PC-9 (cell line): ENCODE measurements at regions of chr5 and their contacts with region 1.

Region 1: DNA sequence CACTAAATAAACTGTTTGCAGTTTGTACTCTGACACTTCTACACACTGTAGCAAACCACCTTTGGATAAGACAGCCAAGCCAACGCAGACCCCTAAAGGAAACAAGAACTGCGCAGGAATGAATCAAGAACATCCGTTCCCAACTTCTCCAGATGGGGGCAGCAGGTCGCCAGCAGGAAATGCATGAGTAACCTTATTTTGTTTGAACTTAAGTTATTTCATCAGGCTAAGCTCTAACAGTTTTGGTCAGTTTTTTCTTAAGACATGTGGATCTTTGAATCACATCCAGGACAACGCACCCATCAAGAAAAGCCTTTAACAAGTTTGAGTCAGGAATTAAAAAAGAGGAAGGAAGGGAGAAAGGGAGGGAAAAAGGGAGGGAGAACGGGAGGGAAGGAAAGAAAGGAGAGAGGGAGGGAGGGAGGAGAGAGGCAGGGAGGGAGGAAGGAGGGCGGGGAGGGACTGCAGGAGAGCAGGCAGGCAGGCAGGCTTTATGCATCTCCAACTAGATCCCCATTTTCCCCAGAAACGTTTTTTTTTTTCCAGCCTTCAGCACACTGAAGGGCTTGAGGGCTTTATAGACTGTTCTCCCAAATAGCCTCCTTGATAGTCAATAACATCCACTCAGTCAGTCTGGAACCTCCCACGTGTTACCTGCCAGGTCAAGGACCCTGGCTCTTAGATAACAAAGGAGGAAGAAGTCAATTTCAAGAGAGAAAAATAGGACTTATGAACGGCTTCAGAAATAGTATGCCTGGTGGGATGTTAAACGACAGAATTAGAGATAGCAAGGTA is 22.2 kb downstream of the BHMT start:
- DNase-seq: peak; percentile 61 to 66
- H3K4me3 ChIP-seq: peak overlapping the region; percentile 30; the same call in 1 of the 2 replicates
- H3K27ac ChIP-seq: peak overlapping the region; percentile 82
- H3K4me1 ChIP-seq: peaks cover 15% of the 10 kb centered on the region
- H3K27me3 ChIP-seq: no peaks in the 10 kb centered on the region
- CTCF ChIP-seq: peak; percentile 78

Region 2: GRCh38 chr5:78127875-78128274 is 1006.0 kb before region 1 on chr5:
- CTCF ChIA-PET with region 1: no interaction called
- POLR2A ChIA-PET with region 1: no interaction called
- intact Hi-C with region 1: no loop called
- DNase-seq: no peak
- H3K4me3 ChIP-seq: no peak overlapping the region
- H3K27ac ChIP-seq: no peak overlapping the region
- H3K4me1 ChIP-seq: no peaks in the 10 kb centered on the region
- H3K27me3 ChIP-seq: no peaks in the 10 kb centered on the region
- CTCF ChIP-seq: peak; percentile 46; the same call in 1 of the 2 replicates

Region 3: DNA sequence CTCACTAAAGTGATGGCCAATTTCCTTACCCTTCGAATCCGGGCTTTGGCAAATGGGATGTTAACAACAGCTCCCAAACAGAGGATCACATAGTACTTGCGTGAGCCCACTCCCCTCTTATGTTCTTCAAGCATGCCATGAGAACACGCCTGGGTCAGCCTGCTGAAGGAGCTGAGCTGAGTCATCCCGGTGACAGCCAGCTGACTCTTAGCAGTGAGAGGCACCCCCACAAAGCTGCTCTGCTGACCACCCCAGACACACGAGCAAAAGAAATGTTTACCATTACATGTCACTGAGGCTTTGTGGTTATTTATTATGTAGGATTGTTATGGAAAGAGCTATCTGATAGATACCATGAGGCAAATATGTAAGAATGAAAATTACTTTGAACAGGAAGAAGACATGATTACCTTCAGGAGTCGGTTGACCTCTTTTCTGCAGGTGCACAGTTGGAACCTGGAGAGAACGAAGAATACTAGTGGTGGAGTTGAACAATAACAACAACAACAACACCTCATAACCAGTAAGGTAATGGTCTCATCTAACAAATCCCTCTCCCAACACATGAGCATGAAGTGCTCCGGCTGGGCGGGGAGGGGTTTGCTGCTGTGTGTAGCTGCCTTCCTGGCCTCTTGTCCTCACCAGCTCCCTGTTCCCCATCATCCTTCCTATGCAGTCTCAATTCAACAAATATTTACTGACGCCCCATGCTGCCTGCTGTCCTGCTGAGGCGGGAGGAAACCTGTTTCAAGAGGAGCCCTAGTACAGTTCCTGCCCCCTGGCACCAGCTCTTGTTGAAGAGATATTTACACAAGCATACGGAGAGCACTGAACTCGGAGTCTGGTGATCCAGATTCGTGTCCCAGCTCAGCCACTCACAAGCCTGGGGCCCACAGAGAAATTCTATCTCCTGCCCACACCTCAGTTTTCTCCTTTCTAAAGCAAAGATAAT is 415.9 kb before region 1 on chr5:
- CTCF ChIA-PET with region 1: no interaction called
- POLR2A ChIA-PET with region 1: no interaction called
- intact Hi-C with region 1: no loop called
- DNase-seq: no peak
- H3K4me3 ChIP-seq: no peak overlapping the region
- H3K27ac ChIP-seq: no peak overlapping the region
- H3K4me1 ChIP-seq: no peaks in the 10 kb centered on the region
- H3K27me3 ChIP-seq: no peaks in the 10 kb centered on the region
- CTCF ChIP-seq: no peak

Region 4: DNA sequence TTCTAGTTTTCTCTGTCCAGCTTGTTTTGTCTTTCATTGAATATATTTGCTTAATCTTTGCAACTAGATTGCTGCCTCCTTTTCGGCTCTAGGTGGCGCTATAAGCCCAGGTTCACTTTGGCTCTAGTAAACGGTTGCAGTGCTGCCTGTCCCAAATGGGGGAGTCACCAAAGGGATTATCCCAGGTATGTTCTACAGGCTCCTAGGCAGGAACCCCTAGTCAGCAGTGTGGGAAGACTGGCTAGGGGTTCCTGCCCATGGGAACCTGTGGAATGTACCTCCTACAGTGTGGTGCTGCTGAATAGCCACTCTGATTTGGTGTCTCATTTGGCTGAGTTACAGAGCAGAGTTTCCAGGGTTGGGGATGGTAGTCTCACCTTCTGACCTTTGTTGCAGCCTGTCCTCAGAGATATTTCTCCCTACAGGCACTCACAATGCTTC is 233.9 kb before region 1 on chr5:
- CTCF ChIA-PET with region 1: interaction called, 4 read pairs
- POLR2A ChIA-PET with region 1: no interaction called
- intact Hi-C with region 1: loop called (anchors 5 kb)
- DNase-seq: peak; percentile 15 to 53
- H3K4me3 ChIP-seq: no peak overlapping the region
- H3K27ac ChIP-seq: no peak overlapping the region
- H3K4me1 ChIP-seq: 0 out of 2 replicates have a peak, but pooled peaks cover 5% of the 10 kb centered on the region
- H3K27me3 ChIP-seq: no peaks in the 10 kb centered on the region
- CTCF ChIP-seq: peak; percentile 83

Region 5: GRCh38 chr5:79235634-79236363 is 101.9 kb after region 1 on chr5 and contains the start of gene JMY:
- CTCF ChIA-PET with region 1: interaction called, 4 read pairs
- POLR2A ChIA-PET with region 1: no interaction called
- intact Hi-C with region 1: loop called (anchors 1 kb)
- DNase-seq: peak; percentile 58 to 82
- H3K4me3 ChIP-seq: peak within 1 kb of the TSS; percentile 72
- H3K27ac ChIP-seq: peak within 1 kb of the TSS; percentile 92
- H3K4me1 ChIP-seq: peaks cover 17% of the 10 kb centered on the region
- H3K27me3 ChIP-seq: no peaks in the 10 kb centered on the region
- CTCF ChIP-seq: no peak
- total RNA-seq, gene JMY: 9.9 and 11.7 TPM in 2 replicates

Region 6: GRCh38 chr5:79464695-79465332 is 331.0 kb after region 1 on chr5:
- CTCF ChIA-PET with region 1: interaction called, 12 read pairs
- POLR2A ChIA-PET with region 1: no interaction called
- intact Hi-C with region 1: loop called (anchors 1 kb)
- DNase-seq: no peak
- H3K4me3 ChIP-seq: no peak overlapping the region
- H3K27ac ChIP-seq: no peak overlapping the region
- H3K4me1 ChIP-seq: no peaks in the 10 kb centered on the region
- H3K27me3 ChIP-seq: no peaks in the 10 kb centered on the region
- CTCF ChIP-seq: peak; percentile 78